Natural killer cell (primary cell): ENCODE measurements at regions of chr11 and their contacts with region 1.

Region 1: DNA sequence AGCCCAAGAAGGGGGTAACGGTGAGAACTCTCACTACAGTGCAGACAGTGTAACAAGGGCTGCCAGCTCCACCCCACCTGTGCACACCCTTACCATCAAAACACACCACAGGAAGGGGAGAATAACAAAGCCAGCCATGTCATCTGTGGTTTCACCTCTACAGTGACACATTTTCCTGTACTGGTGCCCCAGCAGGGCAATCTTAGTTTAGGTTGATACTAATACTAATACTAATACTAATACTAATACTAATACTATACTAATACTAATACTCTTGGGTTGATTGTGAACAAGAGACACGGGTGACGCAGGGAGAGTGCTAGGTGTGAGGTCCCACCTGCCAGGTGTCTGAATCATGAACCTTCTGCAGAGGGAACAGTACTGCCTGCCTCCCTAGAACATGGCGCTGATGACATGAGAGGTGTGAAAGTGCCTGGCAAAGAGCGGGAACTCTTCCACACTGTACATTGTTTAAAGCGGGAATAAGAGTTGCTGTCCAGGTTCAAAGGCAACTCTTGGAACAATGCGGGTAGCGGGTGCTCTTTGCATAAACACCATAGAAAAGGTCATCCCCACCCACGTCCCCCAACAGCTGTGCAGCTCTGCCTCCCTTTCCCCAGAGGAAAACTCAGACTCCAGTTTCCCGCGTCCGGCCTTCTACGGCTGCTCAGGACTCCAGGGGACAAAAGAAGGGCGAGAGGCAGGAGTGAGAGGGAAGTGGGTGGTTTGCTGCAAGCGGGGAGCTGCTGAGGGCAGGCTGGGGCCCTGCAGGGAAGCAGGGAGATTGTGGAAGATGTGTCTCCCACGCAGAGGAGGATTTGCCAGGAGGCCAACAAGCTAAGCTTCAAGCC is 25.0 kb upstream of the TMPRSS4 start:
- DNase-seq: peak in 1 of 2 donors; percentile 90
- ATAC-seq: peak; percentile 81 to 89 (median 82)
- H3K4me3 ChIP-seq: no peak overlapping the region
- H3K4me3 Mint-ChIP-seq: peak overlapping the region; percentile 75
- H3K27ac ChIP-seq: peak overlapping the region; percentile 35
- H3K27ac Mint-ChIP-seq: peak overlapping the region; percentile 73 to 90
- H3K4me1 ChIP-seq: peaks cover 61% of the 10 kb centered on the region
- H3K4me1 Mint-ChIP-seq: peaks cover 48 to 55% of the 10 kb centered on the region in 2 donors
- H3K27me3 ChIP-seq: no peaks in the 10 kb centered on the region
- H3K27me3 Mint-ChIP-seq: peaks cover 10 to 11% of the 10 kb centered on the region in 2 donors
- CTCF ChIP-seq: no peak

Region 2: DNA sequence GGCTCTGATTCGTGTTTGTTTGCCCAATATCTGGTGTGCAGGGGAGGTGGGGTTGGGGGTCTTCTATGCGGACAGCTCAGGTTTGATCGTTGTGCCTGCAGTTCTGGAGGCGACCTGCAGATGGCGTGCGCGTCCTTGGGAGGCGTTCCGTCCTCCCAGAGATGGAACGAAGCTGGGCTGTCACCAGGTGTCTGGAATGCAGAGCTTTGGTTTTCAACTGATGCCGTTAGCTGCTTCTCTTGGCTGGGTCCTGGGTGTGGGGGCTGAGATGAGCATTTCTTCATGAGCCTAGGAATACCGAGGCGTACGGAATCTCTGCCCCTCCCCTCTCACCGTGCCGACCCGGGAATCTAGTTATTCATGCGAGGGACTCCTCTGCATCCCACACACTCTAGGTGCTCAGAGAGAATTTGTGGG is 625.6 kb before region 1 on chr11:
- intact Hi-C with region 1: loop called (anchors 5 kb)
- DNase-seq: peak; percentile 56 to 76
- ATAC-seq: peak; percentile 44 to 71 (median 59)
- H3K4me3 ChIP-seq: no peak overlapping the region
- H3K4me3 Mint-ChIP-seq: no peak overlapping the region
- H3K27ac ChIP-seq: no peak overlapping the region
- H3K27ac Mint-ChIP-seq: no peak overlapping the region
- H3K4me1 ChIP-seq: peaks cover 9% of the 10 kb centered on the region
- H3K4me1 Mint-ChIP-seq: peaks cover 7 to 14% of the 10 kb centered on the region in 2 donors
- H3K27me3 ChIP-seq: no peaks in the 10 kb centered on the region
- H3K27me3 Mint-ChIP-seq: peaks cover 8 to 15% of the 10 kb centered on the region in 2 donors
- CTCF ChIP-seq: peak; percentile 84

Region 3: DNA sequence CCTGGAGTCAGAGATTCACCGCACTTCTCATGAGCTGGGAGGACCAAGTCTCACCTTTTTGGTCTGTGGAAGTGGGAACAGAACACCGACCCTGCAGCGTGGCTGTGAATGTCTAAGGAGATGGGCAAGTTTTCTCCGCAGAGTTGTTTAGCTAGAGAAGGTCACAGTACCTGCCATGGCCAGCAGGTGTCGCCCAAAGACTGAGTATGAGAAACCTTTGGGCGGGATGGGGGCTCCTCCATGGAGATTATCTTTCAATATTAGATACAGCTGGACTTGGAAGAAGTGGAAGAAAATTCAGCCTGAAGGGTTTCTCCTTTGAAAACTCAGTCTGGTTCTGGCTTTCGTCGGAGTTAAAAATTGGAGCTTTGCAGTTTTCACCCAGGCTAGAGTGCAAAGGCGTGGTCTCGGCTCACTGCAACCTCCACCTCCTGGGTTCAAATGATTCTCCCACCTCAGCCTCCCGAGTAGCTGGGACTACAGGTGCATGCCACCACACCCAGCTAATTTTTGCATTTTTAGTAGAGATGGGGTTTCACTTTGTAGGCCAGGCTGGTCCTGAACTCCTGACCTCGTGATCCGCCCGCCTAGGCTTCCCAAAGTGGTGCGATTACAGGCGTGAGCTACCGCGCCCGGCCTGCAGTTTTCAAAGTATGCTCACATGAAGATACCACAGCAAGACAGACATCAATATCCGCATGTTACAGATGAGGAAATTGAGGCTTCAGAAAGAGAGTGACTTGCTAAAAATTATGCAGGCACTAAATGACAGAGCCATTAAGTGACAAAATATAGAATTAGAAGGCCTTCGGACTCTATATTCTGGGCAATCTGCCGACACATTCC is 244.1 kb before region 1 on chr11:
- intact Hi-C with region 1: loop called (anchors 1 kb)
- DNase-seq: peak; percentile 74 to 88
- ATAC-seq: peak; percentile 46 to 91 (median 83)
- H3K4me3 ChIP-seq: no peak overlapping the region
- H3K4me3 Mint-ChIP-seq: no peak overlapping the region
- H3K27ac ChIP-seq: no peak overlapping the region
- H3K27ac Mint-ChIP-seq: no peak overlapping the region
- H3K4me1 ChIP-seq: peaks cover 15% of the 10 kb centered on the region
- H3K4me1 Mint-ChIP-seq: no peaks in the 10 kb centered on the region
- H3K27me3 ChIP-seq: no peaks in the 10 kb centered on the region
- H3K27me3 Mint-ChIP-seq: peaks cover 0 to 18% of the 10 kb centered on the region in 2 donors
- CTCF ChIP-seq: peak; percentile 98

Region 4: DNA sequence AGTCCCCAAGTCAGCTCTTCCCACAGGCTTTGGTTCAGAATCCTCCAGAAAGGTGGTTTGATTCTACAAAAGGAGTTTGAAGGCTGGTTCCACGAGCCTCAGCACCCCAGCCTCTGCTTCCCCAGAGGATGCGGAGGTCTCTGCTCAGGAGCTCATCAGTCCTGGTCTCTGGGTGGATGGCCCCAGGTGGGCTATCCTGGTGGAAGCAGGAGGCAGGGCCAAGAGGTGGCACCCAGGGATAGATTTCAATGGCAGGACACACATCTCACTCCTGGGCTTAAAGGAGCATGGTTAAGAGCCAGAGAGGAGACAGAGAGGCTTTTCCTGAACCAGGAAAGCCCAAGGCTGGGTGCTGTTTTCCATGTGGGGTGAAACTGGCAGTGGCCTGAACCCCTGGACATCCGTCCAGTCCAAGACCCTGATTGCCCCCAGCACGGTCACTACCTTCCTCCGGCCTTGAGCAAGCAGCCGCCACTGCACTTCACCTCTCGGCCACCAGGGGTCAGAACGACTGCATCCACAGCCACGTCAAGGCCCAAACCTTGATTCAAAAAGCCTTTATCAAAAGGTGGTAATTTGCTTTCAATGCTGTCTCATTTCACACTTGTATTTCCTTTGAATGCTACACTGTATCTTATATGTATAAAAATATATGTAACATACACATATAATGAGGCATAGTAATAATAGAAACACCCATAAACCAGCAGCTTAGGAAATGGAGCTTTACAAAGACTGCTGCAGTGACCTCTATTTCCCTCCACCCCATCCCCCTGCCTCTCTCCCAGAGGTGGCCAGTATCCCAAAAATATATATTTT is 208.0 kb before region 1 on chr11:
- intact Hi-C with region 1: loop called (anchors 1 kb)
- DNase-seq: peak; percentile 78 to 90
- ATAC-seq: peak; percentile 69 to 94 (median 86)
- H3K4me3 ChIP-seq: no peak overlapping the region
- H3K4me3 Mint-ChIP-seq: no peak overlapping the region
- H3K27ac ChIP-seq: no peak overlapping the region
- H3K27ac Mint-ChIP-seq: no peak overlapping the region
- H3K4me1 ChIP-seq: peaks cover 17% of the 10 kb centered on the region
- H3K4me1 Mint-ChIP-seq: no peaks in the 10 kb centered on the region
- H3K27me3 ChIP-seq: no peaks in the 10 kb centered on the region
- H3K27me3 Mint-ChIP-seq: no peaks in the 10 kb centered on the region
- CTCF ChIP-seq: peak; percentile 96

Region 5: GRCh38 chr11:117946842-117947526 is 104.9 kb before region 1 on chr11:
- intact Hi-C with region 1: loop called (anchors 1 kb)
- DNase-seq: peak; percentile 82 to 90
- ATAC-seq: peak; percentile 58 to 70 (median 60)
- H3K4me3 ChIP-seq: no peak overlapping the region
- H3K4me3 Mint-ChIP-seq: peak overlapping the region; percentile 38
- H3K27ac ChIP-seq: no peak overlapping the region
- H3K27ac Mint-ChIP-seq: no peak overlapping the region
- H3K4me1 ChIP-seq: peaks cover 54% of the 10 kb centered on the region
- H3K4me1 Mint-ChIP-seq: peaks cover 43 to 56% of the 10 kb centered on the region in 2 donors
- H3K27me3 ChIP-seq: no peaks in the 10 kb centered on the region
- H3K27me3 Mint-ChIP-seq: peaks cover 2 to 10% of the 10 kb centered on the region in 2 donors
- CTCF ChIP-seq: peak; percentile 96

Region 6: GRCh38 chr11:117985953-117986887 is 65.6 kb before region 1 on chr11 and contains the start of gene IL10RA:
- intact Hi-C with region 1: loop called (anchors 5 kb)
- DNase-seq: peak; percentile 92
- ATAC-seq: peak; percentile 86 to 93 (median 89)
- H3K4me3 ChIP-seq: peak within 1 kb of the TSS; percentile 99
- H3K4me3 Mint-ChIP-seq: peak within 1 kb of the TSS; percentile 99
- H3K27ac ChIP-seq: peak within 1 kb of the TSS; percentile 96
- H3K27ac Mint-ChIP-seq: peak within 1 kb of the TSS; percentile 94 to 98
- H3K4me1 ChIP-seq: peaks cover 65% of the 10 kb centered on the region
- H3K4me1 Mint-ChIP-seq: peaks cover 78 to 80% of the 10 kb centered on the region in 2 donors
- H3K27me3 ChIP-seq: no peaks in the 10 kb centered on the region
- H3K27me3 Mint-ChIP-seq: no peaks in the 10 kb centered on the region
- CTCF ChIP-seq: no peak
- total RNA-seq, gene IL10RA: 263 to 286 (median 268) TPM

Region 7: DNA sequence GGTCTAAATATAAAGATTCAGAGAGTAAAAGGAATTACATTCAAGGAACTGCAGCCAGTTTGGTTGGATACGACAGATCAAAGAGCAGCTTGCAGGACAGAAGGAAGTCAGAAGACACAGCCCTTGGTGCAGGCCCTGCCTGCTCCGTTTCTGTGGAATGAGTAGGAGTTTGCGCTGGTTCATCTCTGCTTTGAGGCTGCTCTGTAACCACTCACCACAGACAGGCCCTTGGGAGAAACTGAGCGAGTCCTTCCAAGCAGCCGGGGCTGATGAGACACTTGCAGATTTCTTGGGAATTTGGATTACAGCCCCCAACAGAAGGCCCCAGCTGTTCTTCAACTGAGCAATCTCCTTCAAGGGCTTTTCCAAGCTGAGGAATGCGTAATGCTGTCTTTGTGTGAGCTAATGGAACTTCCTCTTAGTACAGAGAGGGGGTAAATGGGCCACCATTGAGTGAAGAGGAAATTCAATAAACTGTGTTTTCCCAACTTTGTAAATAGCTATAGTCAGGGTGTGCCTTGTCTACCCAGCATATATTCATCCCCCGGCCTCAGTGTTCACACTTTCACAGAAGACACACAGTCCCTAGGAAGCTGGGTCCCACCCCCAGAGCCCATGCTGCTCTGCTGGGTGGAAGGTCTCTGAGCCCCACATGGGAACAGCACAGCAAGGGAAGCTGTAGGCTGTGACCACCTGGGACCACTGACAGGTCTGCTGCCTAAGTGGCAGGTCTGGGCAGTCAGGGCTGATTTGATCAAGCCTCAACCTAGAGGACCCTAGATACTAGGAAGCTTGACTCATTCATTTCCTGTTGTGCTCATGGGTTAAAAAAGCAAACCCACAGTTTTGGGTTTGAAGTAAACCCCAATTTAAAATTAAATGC is 49.1 kb before region 1 on chr11:
- intact Hi-C with region 1: loop called (anchors 1 kb)
- DNase-seq: peak in 1 of 2 donors; percentile 59
- ATAC-seq: peak; percentile 14 to 43 (median 21)
- H3K4me3 ChIP-seq: no peak overlapping the region
- H3K4me3 Mint-ChIP-seq: peak overlapping the region; percentile 87
- H3K27ac ChIP-seq: peak overlapping the region; percentile 75
- H3K27ac Mint-ChIP-seq: peak overlapping the region; percentile 93 to 97
- H3K4me1 ChIP-seq: peaks cover 98% of the 10 kb centered on the region
- H3K4me1 Mint-ChIP-seq: peaks cover 90 to 96% of the 10 kb centered on the region in 2 donors
- H3K27me3 ChIP-seq: no peaks in the 10 kb centered on the region
- H3K27me3 Mint-ChIP-seq: no peaks in the 10 kb centered on the region
- CTCF ChIP-seq: no peak